PC-9 (cell line): ENCODE measurements at regions of chr22 and their contacts with region 1.

Region 1: DNA sequence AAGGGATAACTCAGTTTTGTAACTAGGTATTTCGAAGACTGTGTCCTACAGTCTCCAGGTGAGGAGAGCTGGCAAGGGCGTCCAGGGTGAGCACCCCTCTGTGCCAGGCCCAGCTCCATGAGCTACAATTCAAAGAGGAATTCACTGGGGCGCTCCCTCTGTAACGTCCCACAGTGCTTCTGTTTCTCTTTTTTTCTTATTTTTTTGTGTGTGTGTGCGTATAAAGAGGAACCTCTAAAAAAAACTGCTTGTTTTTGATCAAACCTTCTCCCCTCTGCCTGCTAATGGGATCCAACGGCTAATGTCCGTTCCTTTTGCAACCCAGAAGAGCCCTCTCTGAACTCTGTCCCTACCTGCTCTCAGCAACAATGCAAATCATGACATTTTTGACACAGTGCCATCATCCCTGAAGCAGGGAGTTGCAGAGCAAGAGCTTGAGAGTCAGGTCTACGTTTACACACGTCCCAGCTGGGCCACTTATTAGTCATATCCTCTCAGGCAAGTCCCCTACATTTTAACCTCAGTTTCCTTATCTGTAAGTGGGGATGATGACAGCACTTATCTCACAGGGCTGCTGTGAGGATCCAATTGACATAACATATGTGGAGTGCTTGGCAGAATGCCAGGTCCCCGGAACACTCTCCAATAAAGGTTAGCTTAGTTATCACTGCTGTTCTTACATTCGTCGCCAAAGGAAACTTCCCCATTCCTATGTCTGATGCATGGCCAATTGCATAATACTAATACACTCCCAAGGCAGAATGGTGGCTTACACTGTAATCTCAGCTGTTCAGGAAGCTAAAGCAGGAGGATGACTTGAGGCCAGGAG is 16.9 kb downstream of the ASCC2 start:
- DNase-seq: peak; percentile 86 to 100
- H3K4me3 ChIP-seq: no peak overlapping the region
- H3K27ac ChIP-seq: peak overlapping the region; percentile 60
- H3K4me1 ChIP-seq: peaks cover 28% of the 10 kb centered on the region
- H3K27me3 ChIP-seq: no peaks in the 10 kb centered on the region
- CTCF ChIP-seq: no peak

Region 2: GRCh38 chr22:29443452-29443851 is 377.7 kb before region 1 on chr22:
- CTCF ChIA-PET with region 1: no interaction called
- POLR2A ChIA-PET with region 1: no interaction called
- intact Hi-C with region 1: no loop called
- DNase-seq: no peak
- H3K4me3 ChIP-seq: no peak overlapping the region
- H3K27ac ChIP-seq: no peak overlapping the region
- H3K4me1 ChIP-seq: no peaks in the 10 kb centered on the region
- H3K27me3 ChIP-seq: no peaks in the 10 kb centered on the region
- CTCF ChIP-seq: no peak

Region 3: DNA sequence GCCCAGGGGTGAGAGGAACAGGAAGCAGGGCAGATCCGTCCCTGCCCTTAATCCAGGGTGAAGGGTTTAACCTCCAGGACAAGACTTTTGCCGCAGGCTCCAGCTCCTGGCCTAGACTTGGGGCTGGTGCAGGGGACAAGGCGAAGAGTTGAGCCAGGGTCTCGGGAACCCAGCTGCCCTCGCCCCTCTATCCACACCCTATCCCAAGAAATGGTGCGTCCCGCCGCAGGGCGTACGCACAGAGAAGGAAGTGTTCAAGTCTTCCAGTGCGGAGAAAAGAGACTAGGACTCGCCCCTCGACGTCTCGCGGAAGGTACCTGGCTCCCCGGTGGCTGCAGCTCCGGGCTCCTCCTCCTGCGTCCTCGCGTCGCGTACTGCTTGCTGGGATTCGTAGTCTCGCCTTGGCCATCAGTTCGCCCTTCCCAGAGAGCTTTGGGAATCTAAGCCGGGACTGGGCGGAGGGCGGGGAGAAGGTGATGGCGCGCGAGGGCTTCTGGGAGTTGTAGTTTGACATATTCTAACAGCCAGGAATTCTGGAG is 54.5 kb before region 1 on chr22 and contains the start of gene ZMAT5:
- CTCF ChIA-PET with region 1: no interaction called
- POLR2A ChIA-PET with region 1: no interaction called
- intact Hi-C with region 1: loop called (anchors 1 kb)
- DNase-seq: peak; percentile 91 to 94
- H3K4me3 ChIP-seq: peak within 1 kb of the TSS; percentile 93
- H3K27ac ChIP-seq: peak within 1 kb of the TSS; percentile 76
- H3K4me1 ChIP-seq: peaks cover 30% of the 10 kb centered on the region
- H3K27me3 ChIP-seq: no peaks in the 10 kb centered on the region
- CTCF ChIP-seq: no peak
- total RNA-seq, gene ZMAT5: 14.2 and 15.5 TPM in 2 replicates

Region 4: DNA sequence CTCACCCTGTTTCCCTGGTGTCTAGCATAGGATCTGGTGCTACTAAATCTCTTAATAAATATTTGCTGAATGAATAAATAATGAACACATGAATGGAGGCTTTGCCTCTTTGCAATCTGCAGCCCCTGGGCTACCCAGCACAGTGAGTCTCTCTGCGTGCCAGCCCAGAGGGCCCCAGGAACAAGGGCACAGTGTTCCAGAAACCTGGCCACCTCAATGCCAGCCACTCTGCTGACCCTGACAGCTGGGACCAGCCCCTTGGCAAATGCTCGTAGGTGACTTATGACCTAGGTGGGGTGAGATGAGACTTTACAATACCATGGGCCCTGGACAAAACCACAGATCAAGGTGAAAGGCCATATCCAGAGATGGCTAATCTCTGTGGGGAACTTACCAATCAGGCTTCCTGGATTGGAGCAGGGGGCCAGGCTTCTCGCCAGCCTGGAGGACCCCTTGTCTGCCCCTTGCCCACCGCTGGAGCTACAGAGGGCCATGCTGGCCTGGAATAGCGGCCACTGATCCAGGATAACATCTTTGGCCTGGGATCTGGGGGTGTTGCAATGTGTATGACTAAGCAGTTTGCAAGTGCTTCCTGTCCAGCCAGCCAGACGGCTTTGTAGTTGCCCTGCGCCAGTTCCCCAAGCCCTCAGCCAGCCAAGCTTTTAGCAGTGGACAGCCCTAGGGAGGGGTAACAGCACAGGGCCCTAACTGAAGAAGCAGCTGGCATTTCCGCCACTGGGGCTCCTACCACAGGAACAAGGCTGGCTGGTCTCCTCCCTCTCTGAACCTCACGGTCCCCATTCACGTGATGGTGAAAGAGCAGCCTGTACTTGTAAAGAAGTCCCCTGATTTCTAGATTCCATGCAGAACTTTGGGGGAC is 22.1 kb before region 1 on chr22:
- CTCF ChIA-PET with region 1: no interaction called
- POLR2A ChIA-PET with region 1: no interaction called
- intact Hi-C with region 1: loop called (anchors 1 kb)
- DNase-seq: peak; percentile 90 to 98
- H3K4me3 ChIP-seq: peak overlapping the region; percentile 44; the same call in 1 of the 2 replicates
- H3K27ac ChIP-seq: peak overlapping the region; percentile 93
- H3K4me1 ChIP-seq: peaks cover 76% of the 10 kb centered on the region
- H3K27me3 ChIP-seq: no peaks in the 10 kb centered on the region
- CTCF ChIP-seq: no peak

Region 5: DNA sequence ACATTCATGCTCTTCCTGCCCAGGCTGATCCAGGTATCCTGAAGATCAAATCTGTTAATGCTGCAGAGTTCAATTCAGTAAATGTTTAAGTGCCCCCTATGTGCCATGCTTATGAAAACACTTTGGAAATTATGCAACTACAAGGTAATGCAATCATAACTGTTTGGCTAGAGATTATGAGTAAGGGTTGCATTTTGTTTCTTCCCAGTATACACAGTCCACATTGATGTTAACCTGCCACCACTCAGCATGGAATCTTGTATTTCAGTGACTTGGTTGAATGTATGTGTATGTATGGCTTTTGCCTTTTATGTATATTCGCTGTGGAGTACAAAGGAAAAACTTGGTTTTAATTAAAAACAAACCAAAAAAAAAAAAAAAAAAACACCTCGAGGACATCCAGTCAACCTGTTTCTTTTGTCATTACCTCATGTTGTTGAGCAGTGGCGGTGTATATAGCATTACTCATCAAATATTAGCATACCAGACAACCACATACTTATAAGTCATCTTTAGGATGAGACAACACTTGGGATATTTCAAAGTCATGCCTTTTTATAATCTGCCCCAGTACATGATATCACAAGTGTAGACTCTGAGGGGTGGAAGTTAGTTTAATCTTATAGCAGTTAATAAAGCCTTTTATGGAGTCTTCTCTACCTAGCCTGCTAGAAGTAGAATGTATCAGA is 173.0 kb after region 1 on chr22:
- CTCF ChIA-PET with region 1: no interaction called
- POLR2A ChIA-PET with region 1: no interaction called
- intact Hi-C with region 1: loop called (anchors 5 kb)
- DNase-seq: peak in 1 of 2 experiments; percentile 87
- H3K4me3 ChIP-seq: no peak overlapping the region
- H3K27ac ChIP-seq: peak overlapping the region; percentile 94
- H3K4me1 ChIP-seq: peaks cover 42% of the 10 kb centered on the region
- H3K27me3 ChIP-seq: no peaks in the 10 kb centered on the region
- CTCF ChIP-seq: peak; percentile 45; the same call in 1 of the 2 replicates